SK-N-SH (cell line): ENCODE measurements at regions of chr2 and their contacts with region 1.

Region 1: DNA sequence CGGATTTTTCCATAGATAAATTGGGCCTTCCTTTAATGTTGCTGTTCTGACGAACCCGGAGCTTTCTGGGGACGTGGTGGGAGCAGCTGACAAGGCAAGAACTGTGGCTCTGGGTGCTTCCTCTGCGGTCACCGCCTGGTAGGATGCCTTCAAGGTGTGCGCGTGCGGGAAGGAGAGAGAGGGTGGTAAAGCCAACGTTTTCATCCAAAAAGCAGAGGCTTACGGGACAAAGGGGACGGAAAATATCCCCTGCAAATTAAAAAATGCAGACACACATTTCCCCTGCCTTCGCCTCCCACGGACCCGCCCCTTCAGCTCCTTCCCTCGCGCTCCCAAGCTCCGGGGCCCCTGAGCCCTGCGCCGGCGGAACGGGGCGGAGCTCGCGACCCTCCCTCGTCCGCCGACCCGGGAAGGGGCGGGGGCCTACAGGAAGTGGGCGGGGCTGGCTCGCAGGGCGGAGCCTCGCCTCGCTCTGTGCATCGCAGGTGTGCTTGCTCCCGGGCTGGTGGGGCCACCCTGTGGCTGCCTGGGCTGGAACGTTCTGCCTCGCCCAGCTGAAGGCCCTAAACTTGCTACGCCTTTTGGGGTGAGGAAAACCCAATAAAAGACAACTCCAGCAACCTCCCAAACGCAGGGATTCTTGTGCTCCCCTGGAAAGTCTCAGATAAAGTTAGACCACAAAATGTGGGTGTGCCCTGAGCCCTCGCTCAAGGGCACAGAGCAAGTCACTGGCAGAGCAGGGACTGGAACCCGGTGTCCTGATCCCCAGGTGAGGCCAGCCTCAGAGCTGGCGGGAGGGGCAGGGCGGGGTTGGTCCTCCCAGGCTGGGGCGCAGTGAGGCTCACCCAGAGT is 25.4 kb upstream of the SLC66A3 start:
- DNase-seq: peak; percentile 96
- H3K4me3 ChIP-seq: peak overlapping the region in 1 of 2 experiments; percentile 29; a peak in 2 of 4 replicates
- H3K27ac ChIP-seq: peak overlapping the region in 1 of 2 experiments; percentile 3; a peak in 1 of 4 replicates
- H3K4me1 ChIP-seq: peaks cover 0 to 20% of the 10 kb centered on the region in 2 experiments; a peak in 1 of 4 replicates
- H3K27me3 ChIP-seq: no peaks in the 10 kb centered on the region
- CTCF ChIP-seq: no peak
- EP300 ChIP-seq: no peak
- RAD21 ChIP-seq: peak; percentile 68

Region 2: GRCh38 chr2:10812362-10813162 is 317.3 kb before region 1 on chr2 and contains the start of gene PDIA6:
- CTCF ChIA-PET with region 1: interaction called, 18 read pairs
- POLR2A ChIA-PET with region 1: interaction called, 4 read pairs
- DNase-seq: peak; percentile 100
- H3K4me3 ChIP-seq: peak within 1 kb of the TSS; percentile 53 to 86
- H3K27ac ChIP-seq: peak within 1 kb of the TSS; percentile 68 to 93
- H3K4me1 ChIP-seq: peaks cover 0 to 47% of the 10 kb centered on the region in 2 experiments; a peak in 2 of 4 replicates
- H3K27me3 ChIP-seq: no peaks in the 10 kb centered on the region
- CTCF ChIP-seq: no peak
- EP300 ChIP-seq: peak in 1 of 2 experiments; percentile 32; a peak in 2 of 4 replicates
- RAD21 ChIP-seq: no peak
- polyA plus RNA-seq, gene PDIA6: 308 and 325 TPM in 2 replicates

Region 3: DNA sequence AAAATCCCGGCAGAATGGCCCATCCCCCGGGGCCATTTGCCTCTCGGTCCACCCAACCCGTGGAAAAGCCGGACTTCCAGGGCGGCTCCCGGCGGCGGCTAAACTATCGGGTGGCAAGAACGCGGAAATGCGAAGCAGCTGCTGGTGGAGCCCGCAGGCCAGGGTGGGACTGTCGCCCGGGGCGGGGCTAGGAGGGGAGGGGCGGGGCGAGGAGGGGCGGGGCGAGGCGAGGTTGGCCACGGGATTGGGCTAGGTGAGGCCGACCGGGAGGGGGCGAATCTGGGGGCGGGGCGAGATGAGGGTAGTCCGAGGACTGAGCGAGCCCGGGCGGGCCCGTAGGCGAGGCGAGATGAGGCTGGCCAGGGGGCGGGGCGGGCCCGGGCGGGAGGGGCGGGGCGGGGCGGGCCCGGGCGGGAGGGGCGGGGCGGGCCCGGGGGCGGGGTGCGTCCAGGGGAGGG is 25.1 kb after region 1 on chr2:
- CTCF ChIA-PET with region 1: interaction called, 41 read pairs
- POLR2A ChIA-PET with region 1: no interaction called
- DNase-seq: peak; percentile 100
- H3K4me3 ChIP-seq: peak overlapping the region; percentile 63 to 84
- H3K27ac ChIP-seq: peak overlapping the region; percentile 6 to 82; a peak in 3 of 4 replicates
- H3K4me1 ChIP-seq: peaks cover 0 to 19% of the 10 kb centered on the region in 2 experiments; a peak in 1 of 4 replicates
- H3K27me3 ChIP-seq: no peaks in the 10 kb centered on the region
- CTCF ChIP-seq: no peak
- EP300 ChIP-seq: no peak; a peak in 1 of 4 replicates
- RAD21 ChIP-seq: no peak

Region 4: GRCh38 chr2:11224887-11225286 is 95.1 kb after region 1 on chr2:
- CTCF ChIA-PET with region 1: interaction called, 20 read pairs
- POLR2A ChIA-PET with region 1: no interaction called
- DNase-seq: no peak
- H3K4me3 ChIP-seq: no peak overlapping the region
- H3K27ac ChIP-seq: no peak overlapping the region
- H3K4me1 ChIP-seq: no peaks in the 10 kb centered on the region; a peak in 1 of 4 replicates
- H3K27me3 ChIP-seq: no peaks in the 10 kb centered on the region
- CTCF ChIP-seq: no peak
- EP300 ChIP-seq: no peak
- RAD21 ChIP-seq: no peak

Region 5: DNA sequence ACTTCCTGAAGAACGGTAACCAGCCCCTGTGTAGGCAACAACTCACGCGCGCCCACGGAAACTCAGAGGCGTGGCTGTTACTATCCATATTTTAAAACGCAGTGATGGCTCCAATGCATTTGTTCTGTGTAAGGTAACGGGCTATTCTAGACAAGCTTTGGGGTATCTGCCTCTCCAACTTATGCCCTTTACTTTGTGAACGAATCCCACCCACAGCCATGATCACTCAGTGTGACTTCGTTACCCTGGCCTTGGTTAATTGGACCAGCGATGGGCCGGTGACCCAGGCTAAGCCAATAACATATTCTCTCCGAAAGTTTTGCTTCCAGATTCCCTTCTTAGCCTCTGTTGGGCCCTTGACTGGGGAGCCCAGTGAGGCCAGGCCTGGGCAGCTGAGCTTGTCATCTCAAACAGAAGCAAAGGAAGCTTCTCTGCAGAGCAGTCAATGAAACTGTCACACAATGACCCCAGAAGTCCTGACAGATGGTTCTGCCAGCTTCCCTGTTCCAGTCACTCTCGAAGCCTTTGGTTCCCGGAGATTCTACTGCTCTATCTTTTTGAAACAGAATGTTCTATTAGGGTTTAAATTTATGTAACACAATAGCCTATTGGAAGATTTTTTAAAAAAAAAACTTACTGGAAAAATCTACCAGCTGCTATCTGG is 245.3 kb after region 1 on chr2:
- CTCF ChIA-PET with region 1: interaction called, 12 read pairs
- POLR2A ChIA-PET with region 1: no interaction called
- DNase-seq: no peak
- H3K4me3 ChIP-seq: no peak overlapping the region
- H3K27ac ChIP-seq: peak overlapping the region; percentile 73 to 90; a peak in 3 of 4 replicates
- H3K4me1 ChIP-seq: peaks cover 14 to 27% of the 10 kb centered on the region in 2 experiments; a peak in 3 of 4 replicates
- H3K27me3 ChIP-seq: no peaks in the 10 kb centered on the region
- CTCF ChIP-seq: no peak
- EP300 ChIP-seq: no peak
- RAD21 ChIP-seq: no peak

Region 6: DNA sequence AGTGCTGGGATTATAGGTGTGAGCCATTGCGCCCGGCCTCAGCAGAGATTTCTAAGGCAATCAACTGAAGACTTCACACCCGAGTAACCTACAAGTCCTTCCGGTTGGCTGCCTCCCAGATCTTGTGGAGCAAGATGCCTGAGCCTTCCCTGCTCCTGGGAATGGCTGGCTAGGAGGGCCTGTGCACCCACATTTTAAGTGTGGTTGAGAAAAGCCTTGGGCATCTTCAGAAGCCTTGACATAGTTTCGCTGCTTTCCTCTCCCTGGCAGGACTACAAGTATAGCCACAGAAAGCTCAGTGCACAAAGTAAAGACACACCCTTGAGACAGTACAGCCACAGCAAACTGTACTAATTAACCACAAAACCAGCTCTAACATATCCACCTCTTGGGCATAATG is 300.9 kb after region 1 on chr2:
- CTCF ChIA-PET with region 1: interaction called, 18 read pairs
- POLR2A ChIA-PET with region 1: no interaction called
- DNase-seq: no peak
- H3K4me3 ChIP-seq: no peak overlapping the region
- H3K27ac ChIP-seq: no peak overlapping the region
- H3K4me1 ChIP-seq: peaks cover 0 to 2% of the 10 kb centered on the region in 2 experiments; a peak in 1 of 4 replicates
- H3K27me3 ChIP-seq: no peaks in the 10 kb centered on the region
- CTCF ChIP-seq: no peak
- EP300 ChIP-seq: no peak
- RAD21 ChIP-seq: no peak